Natural killer cell (primary cell): ENCODE measurements at regions of chr6 and their contacts with region 1.

Region 1: GRCh38 chr6:26196846-26197648 is 109.8 kb downstream of the HFE start:
- DNase-seq: peak; percentile 65 to 94
- ATAC-seq: peak; percentile 53 to 73 (median 62)
- H3K4me3 ChIP-seq: peak overlapping the region; percentile 92
- H3K4me3 Mint-ChIP-seq: peak overlapping the region; percentile 96
- H3K27ac ChIP-seq: peak overlapping the region; percentile 94
- H3K27ac Mint-ChIP-seq: peak overlapping the region; percentile 98 to 99
- H3K4me1 ChIP-seq: peaks cover 26% of the 10 kb centered on the region
- H3K4me1 Mint-ChIP-seq: peaks cover 45 to 51% of the 10 kb centered on the region in 2 donors
- H3K27me3 ChIP-seq: no peaks in the 10 kb centered on the region
- H3K27me3 Mint-ChIP-seq: no peaks in the 10 kb centered on the region
- CTCF ChIP-seq: no peak

Region 2: GRCh38 chr6:26045065-26045927 is 151.8 kb before region 1 on chr6:
- intact Hi-C with region 1: loop called (anchors 2 kb)
- DNase-seq: peak; percentile 64 to 92
- ATAC-seq: peak; percentile 52 to 73 (median 64)
- H3K4me3 ChIP-seq: peak overlapping the region; percentile 64
- H3K4me3 Mint-ChIP-seq: peak overlapping the region; percentile 95
- H3K27ac ChIP-seq: peak overlapping the region; percentile 91
- H3K27ac Mint-ChIP-seq: peak overlapping the region; percentile 97 to 98
- H3K4me1 ChIP-seq: peaks cover 26% of the 10 kb centered on the region
- H3K4me1 Mint-ChIP-seq: peaks cover 25 to 28% of the 10 kb centered on the region in 2 donors
- H3K27me3 ChIP-seq: no peaks in the 10 kb centered on the region
- H3K27me3 Mint-ChIP-seq: no peaks in the 10 kb centered on the region
- CTCF ChIP-seq: no peak

Region 3: GRCh38 chr6:26122793-26123674 is 74.0 kb before region 1 on chr6:
- intact Hi-C with region 1: loop called (anchors 1 kb)
- DNase-seq: peak; percentile 75 to 98
- ATAC-seq: peak; percentile 54 to 76 (median 63)
- H3K4me3 ChIP-seq: peak overlapping the region; percentile 82
- H3K4me3 Mint-ChIP-seq: peak overlapping the region; percentile 99
- H3K27ac ChIP-seq: peak overlapping the region; percentile 97
- H3K27ac Mint-ChIP-seq: peak overlapping the region; percentile 98 to 100
- H3K4me1 ChIP-seq: peaks cover 26% of the 10 kb centered on the region
- H3K4me1 Mint-ChIP-seq: peaks cover 42 to 52% of the 10 kb centered on the region in 2 donors
- H3K27me3 ChIP-seq: no peaks in the 10 kb centered on the region
- H3K27me3 Mint-ChIP-seq: no peaks in the 10 kb centered on the region
- CTCF ChIP-seq: no peak

Region 4: GRCh38 chr6:26183581-26184366 is 13.3 kb before region 1 on chr6:
- intact Hi-C with region 1: loop called (anchors 2 kb)
- DNase-seq: peak; percentile 50 to 87
- ATAC-seq: peak; percentile 86 to 90 (median 88)
- H3K4me3 ChIP-seq: peak overlapping the region; percentile 60
- H3K4me3 Mint-ChIP-seq: peak overlapping the region; percentile 93
- H3K27ac ChIP-seq: peak overlapping the region; percentile 58
- H3K27ac Mint-ChIP-seq: peak overlapping the region; percentile 89 to 90
- H3K4me1 ChIP-seq: peaks cover 28% of the 10 kb centered on the region
- H3K4me1 Mint-ChIP-seq: peaks cover 27 to 50% of the 10 kb centered on the region in 2 donors
- H3K27me3 ChIP-seq: no peaks in the 10 kb centered on the region
- H3K27me3 Mint-ChIP-seq: no peaks in the 10 kb centered on the region
- CTCF ChIP-seq: no peak

Region 5: GRCh38 chr6:26270903-26271667 is 74.0 kb after region 1 on chr6:
- intact Hi-C with region 1: loop called (anchors 1 kb)
- DNase-seq: peak; percentile 78 to 92
- ATAC-seq: peak in 2 of 3 donors; percentile 17 to 20
- H3K4me3 ChIP-seq: peak overlapping the region; percentile 62
- H3K4me3 Mint-ChIP-seq: no peak overlapping the region
- H3K27ac ChIP-seq: peak overlapping the region; percentile 92
- H3K27ac Mint-ChIP-seq: no peak overlapping the region
- H3K4me1 ChIP-seq: peaks cover 30% of the 10 kb centered on the region
- H3K4me1 Mint-ChIP-seq: peaks cover 14 to 21% of the 10 kb centered on the region in 2 donors
- H3K27me3 ChIP-seq: no peaks in the 10 kb centered on the region
- H3K27me3 Mint-ChIP-seq: no peaks in the 10 kb centered on the region
- CTCF ChIP-seq: no peak

Region 6: GRCh38 chr6:27146706-27147505 is 949.9 kb after region 1 on chr6:
- intact Hi-C with region 1: loop called (anchors 2 kb)
- DNase-seq: peak; percentile 74 to 97
- ATAC-seq: peak; percentile 76 to 88 (median 82)
- H3K4me3 ChIP-seq: peak overlapping the region; percentile 74
- H3K4me3 Mint-ChIP-seq: no peak overlapping the region
- H3K27ac ChIP-seq: peak overlapping the region; percentile 88
- H3K27ac Mint-ChIP-seq: no peak overlapping the region
- H3K4me1 ChIP-seq: peaks cover 23% of the 10 kb centered on the region
- H3K4me1 Mint-ChIP-seq: peaks cover 0 to 3% of the 10 kb centered on the region in 2 donors
- H3K27me3 ChIP-seq: no peaks in the 10 kb centered on the region
- H3K27me3 Mint-ChIP-seq: no peaks in the 10 kb centered on the region
- CTCF ChIP-seq: no peak